HCT116 (cell line): ENCODE measurements at regions of chr5 and their contacts with region 1.

Region 1: DNA sequence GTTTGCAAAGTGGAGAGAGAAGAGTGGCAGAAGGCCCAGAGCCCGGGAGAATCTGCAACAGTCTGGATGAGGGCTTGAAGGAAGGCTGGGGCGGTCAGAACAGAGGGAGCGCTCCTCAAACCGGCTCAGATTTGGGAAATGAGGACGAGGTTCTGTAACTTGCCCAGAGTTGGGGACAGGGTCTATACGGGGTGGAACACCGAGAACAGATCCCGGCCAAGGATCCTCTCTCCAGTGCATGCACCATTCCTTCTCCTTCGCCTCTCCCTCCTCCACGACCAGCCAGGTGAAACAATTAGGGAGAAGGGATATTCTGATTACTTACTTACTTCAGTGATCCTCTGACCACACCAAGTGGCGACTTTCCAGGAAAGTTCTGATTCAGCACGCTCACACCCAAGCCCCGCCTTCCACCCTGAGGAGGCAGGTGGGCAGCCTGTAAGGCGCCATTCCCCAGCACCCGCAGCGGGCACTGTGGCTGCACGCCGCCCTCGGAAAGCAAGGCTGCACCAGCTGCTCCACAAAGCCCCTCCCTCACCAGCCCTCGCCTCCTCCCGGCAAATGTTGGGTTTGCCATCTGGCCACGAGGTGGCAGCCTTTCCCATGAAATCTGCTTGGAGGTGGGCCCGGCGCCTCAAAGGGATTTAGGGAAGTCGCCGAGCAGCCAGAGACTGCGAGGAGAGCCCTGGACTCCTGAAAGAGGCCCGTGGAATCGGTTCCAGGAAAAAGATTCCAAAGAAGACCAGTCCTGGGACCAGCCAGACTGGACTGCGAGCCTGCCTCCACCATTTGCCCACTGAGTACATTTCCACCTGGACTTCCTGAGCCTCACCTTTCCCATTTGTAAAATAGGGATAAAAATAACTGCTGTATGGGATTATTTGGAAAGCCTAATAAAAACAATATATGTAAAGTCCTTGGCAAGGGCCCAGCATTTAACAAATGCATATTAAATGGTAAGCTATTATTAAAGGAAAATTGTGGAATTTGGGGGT is 22.2 kb upstream of the WWC1 start:
- DNase-seq: peak; percentile 83
- ATAC-seq: peak; percentile 92
- H3K4me3 ChIP-seq: peak overlapping the region; percentile 22 to 36
- H3K27ac ChIP-seq: no peak overlapping the region
- H3K4me1 ChIP-seq: peaks cover 12 to 19% of the 10 kb centered on the region in 2 experiments; a peak in 3 of 4 replicates
- H3K27me3 ChIP-seq: no peaks in the 10 kb centered on the region
- CTCF ChIP-seq: peak; percentile 74 to 94 (median 93)
- POLR2A ChIP-seq: no peak
- RAD21 ChIP-seq: peak; percentile 99

Region 2: GRCh38 chr5:168422431-168422830 is 153.2 kb after region 1 on chr5:
- CTCF ChIA-PET with region 1: interaction called, 17 read pairs
- POLR2A ChIA-PET with region 1: no interaction called
- RAD21 ChIA-PET with region 1: interaction called in 1 of 2 experiments, 3 read pairs
- intact Hi-C with region 1: loop called (anchors 1 kb)
- DNase-seq: peak; percentile 16
- ATAC-seq: peak; percentile 79
- H3K4me3 ChIP-seq: no peak overlapping the region
- H3K27ac ChIP-seq: no peak overlapping the region
- H3K4me1 ChIP-seq: peaks cover 0 to 7% of the 10 kb centered on the region in 2 experiments; a peak in 2 of 4 replicates
- H3K27me3 ChIP-seq: no peaks in the 10 kb centered on the region
- CTCF ChIP-seq: peak; percentile 39 to 56 (median 47); a peak in 5 of 6 replicates
- POLR2A ChIP-seq: no peak
- RAD21 ChIP-seq: peak; percentile 82

Region 3: DNA sequence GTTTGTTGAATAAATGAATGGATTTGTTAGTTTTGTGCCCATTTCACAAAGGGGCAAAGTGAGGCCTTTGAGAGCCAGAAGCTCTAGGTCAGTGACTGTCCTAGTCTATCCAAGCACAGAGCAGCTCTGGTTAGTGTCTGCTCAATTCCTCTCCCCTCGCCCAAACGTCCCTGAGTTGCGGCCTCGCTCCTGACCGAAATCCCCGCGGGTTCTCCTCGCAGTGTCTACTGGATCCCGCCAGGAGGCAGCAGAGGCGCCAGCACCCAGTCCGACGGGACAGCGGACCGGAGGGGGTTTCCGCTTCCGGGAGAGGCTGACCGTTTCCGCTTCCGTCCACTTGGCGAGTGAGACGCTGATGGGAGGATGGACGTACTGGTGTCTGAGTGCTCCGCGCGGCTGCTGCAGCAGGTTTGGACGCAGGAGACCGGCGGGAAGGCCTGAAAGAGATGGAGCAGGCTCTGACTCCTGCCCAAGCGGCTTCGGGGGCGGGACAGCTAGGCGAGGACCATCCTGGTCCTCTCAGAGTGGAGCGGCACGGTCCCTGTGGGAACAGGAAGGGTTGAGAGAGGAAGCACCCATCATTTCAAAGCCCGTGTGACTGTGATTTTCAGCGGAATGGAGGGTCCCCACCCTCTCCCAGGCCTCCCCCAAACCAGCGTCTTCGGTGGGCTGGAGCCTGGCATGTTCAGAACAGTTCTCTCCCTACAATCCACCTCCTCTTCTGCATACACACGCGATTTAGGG is 217.1 kb after region 1 on chr5 and contains the start of gene RARS1:
- CTCF ChIA-PET with region 1: interaction called, 5 read pairs
- POLR2A ChIA-PET with region 1: no interaction called
- RAD21 ChIA-PET with region 1: no interaction called
- intact Hi-C with region 1: loop called (anchors 1 kb)
- DNase-seq: peak; percentile 85
- ATAC-seq: peak; percentile 91
- H3K4me3 ChIP-seq: peak within 1 kb of the TSS; percentile 96 to 100
- H3K27ac ChIP-seq: peak within 1 kb of the TSS; percentile 61
- H3K4me1 ChIP-seq: peaks cover 5 to 10% of the 10 kb centered on the region in 2 experiments; a peak in 3 of 4 replicates
- H3K27me3 ChIP-seq: no peaks in the 10 kb centered on the region
- CTCF ChIP-seq: peak; percentile 60 to 98 (median 94); a peak in 5 of 6 replicates
- POLR2A ChIP-seq: peak; percentile 81
- RAD21 ChIP-seq: peak; percentile 66
- total RNA-seq, gene RARS1: 122 TPM

Region 4: DNA sequence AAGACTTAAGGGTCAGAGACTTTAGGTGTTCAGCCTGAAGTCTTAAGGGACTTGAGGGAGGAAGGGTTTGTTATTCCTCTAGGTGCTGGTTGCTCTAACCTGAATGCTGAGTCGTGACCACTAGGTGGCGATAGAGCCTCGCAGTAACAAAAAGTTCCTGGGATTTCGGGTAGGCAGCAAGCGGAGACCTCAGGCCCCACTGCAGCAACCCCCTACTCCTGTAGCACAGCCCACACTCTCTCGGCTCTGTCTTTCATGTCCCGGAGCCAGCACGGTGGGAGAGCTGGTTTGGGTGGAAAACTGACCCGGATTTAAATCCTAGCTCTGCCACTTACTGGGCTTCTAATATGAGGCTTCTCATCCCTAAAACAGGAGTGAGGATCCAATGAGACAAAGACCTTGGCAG is 410.3 kb after region 1 on chr5:
- CTCF ChIA-PET with region 1: no interaction called
- POLR2A ChIA-PET with region 1: no interaction called
- RAD21 ChIA-PET with region 1: no interaction called
- intact Hi-C with region 1: loop called (anchors 2 kb)
- DNase-seq: peak; percentile 59
- ATAC-seq: peak; percentile 91
- H3K4me3 ChIP-seq: no peak overlapping the region
- H3K27ac ChIP-seq: no peak overlapping the region
- H3K4me1 ChIP-seq: no peaks in the 10 kb centered on the region
- H3K27me3 ChIP-seq: no peaks in the 10 kb centered on the region; the same call in 1 of the 2 replicates
- CTCF ChIP-seq: peak; percentile 59 to 96 (median 87); a peak in 5 of 6 replicates
- POLR2A ChIP-seq: no peak
- RAD21 ChIP-seq: peak; percentile 83

Region 5: DNA sequence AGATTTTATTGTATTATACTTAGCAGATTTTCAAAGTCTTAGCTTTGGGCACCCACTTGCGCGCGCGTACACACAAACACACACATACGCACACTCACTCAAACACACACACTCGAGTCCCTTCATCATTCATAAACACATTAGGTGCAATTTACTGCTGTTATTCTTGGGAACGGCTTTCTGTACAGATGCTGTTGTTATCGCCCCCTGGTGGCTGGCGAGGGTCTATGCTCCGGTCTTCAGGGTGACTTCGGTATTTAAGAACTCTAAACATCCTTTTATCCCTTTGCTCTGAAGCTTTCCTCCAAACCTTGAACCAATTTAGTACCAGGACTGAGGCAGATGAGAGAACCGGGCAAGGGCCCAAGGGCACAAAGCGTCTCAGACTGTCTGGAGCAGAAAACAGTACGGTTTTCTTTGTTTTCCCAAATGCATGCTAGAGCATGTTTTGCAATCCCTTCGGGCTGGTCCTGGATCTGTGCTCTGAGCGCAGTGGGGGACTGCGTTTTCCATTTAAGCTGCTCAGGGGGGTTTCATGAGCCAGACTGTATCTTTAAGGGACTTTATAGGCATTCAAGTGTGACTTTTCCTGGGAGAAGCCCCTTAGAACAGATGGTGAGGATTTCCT is 1033.4 kb after region 1 on chr5:
- CTCF ChIA-PET with region 1: no interaction called
- POLR2A ChIA-PET with region 1: no interaction called
- RAD21 ChIA-PET with region 1: no interaction called
- intact Hi-C with region 1: loop called (anchors 2 kb)
- DNase-seq: peak; percentile 48
- ATAC-seq: peak; percentile 89
- H3K4me3 ChIP-seq: no peak overlapping the region
- H3K27ac ChIP-seq: no peak overlapping the region
- H3K4me1 ChIP-seq: no peaks in the 10 kb centered on the region
- H3K27me3 ChIP-seq: peaks cover 16% of the 10 kb centered on the region; the same call in 1 of the 2 replicates
- CTCF ChIP-seq: peak; percentile 78 to 96 (median 87)
- POLR2A ChIP-seq: no peak
- RAD21 ChIP-seq: peak; percentile 74

Region 6: DNA sequence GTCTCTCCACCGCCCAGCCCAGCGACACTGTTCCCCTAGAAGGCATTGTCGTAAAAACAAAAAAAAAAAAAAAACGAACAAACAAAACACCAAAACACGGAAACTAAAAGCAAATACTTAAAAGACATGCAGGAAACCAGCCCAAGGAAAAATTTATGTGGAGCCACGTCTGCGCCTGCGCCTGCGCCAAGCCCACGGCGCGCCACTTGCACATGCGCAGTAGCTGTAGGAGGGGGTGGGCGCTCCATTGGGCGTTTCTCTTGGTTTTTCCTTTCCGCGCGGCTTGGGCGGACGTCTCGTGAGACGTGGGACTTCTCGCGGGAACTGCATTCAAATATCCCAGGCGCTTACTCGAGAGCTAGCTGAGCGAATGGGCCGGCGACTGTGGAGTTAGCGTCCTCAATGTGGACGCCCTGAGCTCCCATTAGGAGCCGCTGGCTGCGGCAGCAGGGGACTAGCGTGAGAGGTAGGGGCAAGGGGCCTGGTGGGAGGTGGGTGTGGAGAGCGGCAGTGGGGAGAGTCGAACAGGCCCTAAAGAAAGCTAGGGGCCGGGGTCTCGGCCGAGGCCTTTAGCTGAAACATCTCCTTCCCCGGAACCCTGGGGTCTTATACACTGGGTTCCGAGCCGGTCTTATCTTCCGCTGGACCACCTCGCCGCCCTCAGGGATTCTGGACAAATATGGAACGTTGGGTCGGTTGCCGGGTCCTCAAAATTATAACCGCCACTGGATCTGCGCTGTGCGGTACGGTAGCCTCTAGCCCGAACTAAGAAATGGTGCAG is 1314.4 kb after region 1 on chr5 and contains the start of gene SPDL1:
- CTCF ChIA-PET with region 1: no interaction called
- POLR2A ChIA-PET with region 1: no interaction called
- RAD21 ChIA-PET with region 1: no interaction called
- intact Hi-C with region 1: loop called (anchors 5 kb)
- DNase-seq: peak; percentile 93
- ATAC-seq: peak; percentile 95
- H3K4me3 ChIP-seq: peak within 1 kb of the TSS; percentile 84 to 86
- H3K27ac ChIP-seq: peak within 1 kb of the TSS; percentile 35
- H3K4me1 ChIP-seq: peaks cover 0 to 16% of the 10 kb centered on the region in 2 experiments; a peak in 1 of 4 replicates
- H3K27me3 ChIP-seq: peaks cover 10% of the 10 kb centered on the region
- CTCF ChIP-seq: no peak
- POLR2A ChIP-seq: peak; percentile 92
- RAD21 ChIP-seq: no peak
- total RNA-seq, gene SPDL1: 28.5 TPM